Stomach (tissue), 19 donors: ENCODE measurements at regions of chr14 and their contacts with region 1.

Region 1: DNA sequence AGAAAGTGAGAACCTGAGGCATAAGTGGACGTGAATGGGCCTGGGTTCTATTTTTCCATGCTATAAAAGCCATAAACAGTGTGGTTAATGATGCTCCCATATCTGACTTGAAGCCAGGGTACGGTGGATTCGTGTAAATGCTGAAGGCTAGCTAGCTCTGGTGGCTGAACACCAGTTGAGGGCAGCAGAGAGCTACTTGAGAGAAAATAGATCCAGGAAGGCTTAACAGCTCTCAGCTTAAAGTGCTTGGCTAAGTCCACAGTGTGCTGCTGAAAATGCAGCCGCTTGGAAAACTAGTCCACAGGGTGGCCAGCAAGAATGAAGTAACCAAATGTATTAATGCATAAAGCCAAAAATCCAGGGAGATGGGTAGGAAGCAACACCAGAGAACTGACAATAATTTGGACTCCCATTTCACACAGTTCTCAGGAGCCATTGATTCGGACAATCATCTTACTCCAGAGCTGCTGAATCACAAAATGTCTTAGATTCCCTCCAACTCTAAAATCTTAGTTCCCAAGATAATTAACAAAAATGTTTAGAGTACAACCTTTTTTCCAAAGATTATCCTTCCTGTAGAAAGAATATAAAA is 15.0 kb upstream of the FOXG1 start:
- DNase-seq: peak; percentile 39 to 74
- H3K4me3 ChIP-seq: no peak overlapping the region
- H3K27ac ChIP-seq: no peak overlapping the region
- H3K4me1 ChIP-seq: peaks cover 0 to 12% (median 3%) of the 10 kb centered on the region in 4 donors
- H3K27me3 ChIP-seq: peaks cover 0 to 67% (median 22%) of the 10 kb centered on the region in 3 donors
- CTCF ChIP-seq: peak in 3 of 7 experiments; percentile 11 to 36 (median 18)
- EP300 ChIP-seq: no peak
- POLR2A ChIP-seq: no peak

Region 2: DNA sequence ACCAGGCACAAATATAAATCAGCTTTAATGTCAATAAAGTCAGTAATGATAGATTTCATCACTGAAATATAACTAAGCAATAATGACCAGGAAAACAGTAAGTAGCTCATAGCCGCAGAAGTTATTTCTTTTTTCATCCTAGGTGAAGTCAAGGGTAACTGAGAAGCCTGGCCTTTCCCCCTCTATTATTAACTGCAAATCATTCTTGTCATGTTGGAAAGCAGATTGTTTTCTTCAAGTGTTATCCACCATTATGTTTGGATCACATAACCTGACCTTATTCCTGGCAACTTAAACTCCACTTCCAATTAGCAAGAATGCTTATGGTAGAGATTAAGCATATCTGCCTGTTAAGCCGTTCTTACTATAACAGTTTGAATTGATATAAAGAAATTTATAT is 588.3 kb before region 1 on chr14:
- intact Hi-C with region 1: no loop called
- DNase-seq: no peak
- H3K4me3 ChIP-seq: no peak overlapping the region
- H3K27ac ChIP-seq: no peak overlapping the region
- H3K4me1 ChIP-seq: no peaks in the 10 kb centered on the region
- H3K27me3 ChIP-seq: no peaks in the 10 kb centered on the region
- CTCF ChIP-seq: no peak
- EP300 ChIP-seq: no peak
- POLR2A ChIP-seq: no peak

Region 3: DNA sequence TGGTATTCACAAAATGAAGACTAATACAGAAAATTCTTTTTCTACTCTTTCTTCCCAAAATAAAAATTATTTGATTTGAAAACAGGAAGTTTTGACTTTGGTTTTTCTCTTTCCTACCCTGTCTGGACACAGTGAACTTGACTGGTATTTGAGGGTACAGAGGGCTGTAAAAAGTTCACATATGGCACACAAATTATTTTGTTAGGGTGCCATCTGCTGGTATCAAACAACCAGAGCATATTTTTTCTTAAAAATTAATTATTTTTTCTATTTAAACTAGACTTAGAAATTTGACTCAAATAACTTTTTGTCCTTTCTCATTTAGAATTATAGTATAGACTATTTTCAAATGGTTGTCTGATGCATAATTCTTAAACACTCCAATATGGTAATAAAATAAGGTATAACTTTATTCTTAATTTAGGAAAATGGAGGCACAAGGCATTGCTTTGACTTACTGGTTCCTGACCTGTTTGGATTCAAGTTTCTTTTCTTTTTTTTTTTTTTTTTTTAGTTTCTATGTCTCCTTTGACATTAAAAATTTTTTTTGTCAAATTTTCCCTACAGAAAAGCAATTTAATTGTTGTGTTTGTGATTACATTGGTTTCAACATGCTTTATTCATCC is 785.4 kb after region 1 on chr14:
- intact Hi-C with region 1: loop called (anchors 10 kb)
- DNase-seq: peak in 1 of 2 donors; percentile 17
- H3K4me3 ChIP-seq: no peak overlapping the region
- H3K27ac ChIP-seq: no peak overlapping the region
- H3K4me1 ChIP-seq: no peaks in the 10 kb centered on the region
- H3K27me3 ChIP-seq: no peaks in the 10 kb centered on the region
- CTCF ChIP-seq: peak in 1 of 7 experiments; percentile 19
- EP300 ChIP-seq: no peak
- POLR2A ChIP-seq: no peak

Region 4: GRCh38 chr14:30214461-30215090 is 1463.0 kb after region 1 on chr14:
- intact Hi-C with region 1: loop called (anchors 10 kb)
- DNase-seq: peak in 1 of 2 donors; percentile 85
- H3K4me3 ChIP-seq: no peak overlapping the region
- H3K27ac ChIP-seq: no peak overlapping the region
- H3K4me1 ChIP-seq: peaks cover 0 to 9% (median 0%) of the 10 kb centered on the region in 4 donors
- H3K27me3 ChIP-seq: peaks cover 0 to 3% (median 0%) of the 10 kb centered on the region in 3 donors
- CTCF ChIP-seq: peak in 5 of 7 experiments; percentile 43 to 59 (median 53)
- EP300 ChIP-seq: no peak
- POLR2A ChIP-seq: no peak